ENCODE measurements at regions of chr19 and their contacts with region 1.

Region 1: GRCh38 chr19:16233836-16234551 is 36.3 kb downstream of the AP1M1 start:
- DNase-seq: no peak
- ATAC-seq: no peak
- H3K4me3 ChIP-seq: no peak overlapping the region
- H3K4me3 Mint-ChIP-seq: peak overlapping the region in 1 of 10 donors; percentile 12
- H3K27ac ChIP-seq: no peak overlapping the region
- H3K27ac Mint-ChIP-seq: peak overlapping the region in 4 of 9 donors; percentile 50 to 82 (median 68)
- H3K4me1 ChIP-seq: peaks cover 0 to 22% of the 10 kb centered on the region in 2 donors
- H3K4me1 Mint-ChIP-seq: peaks cover 18 to 31% (median 28%) of the 10 kb centered on the region in 7 donors
- H3K27me3 ChIP-seq: no peaks in the 10 kb centered on the region
- H3K27me3 Mint-ChIP-seq: no peaks in the 10 kb centered on the region

Region 2: DNA sequence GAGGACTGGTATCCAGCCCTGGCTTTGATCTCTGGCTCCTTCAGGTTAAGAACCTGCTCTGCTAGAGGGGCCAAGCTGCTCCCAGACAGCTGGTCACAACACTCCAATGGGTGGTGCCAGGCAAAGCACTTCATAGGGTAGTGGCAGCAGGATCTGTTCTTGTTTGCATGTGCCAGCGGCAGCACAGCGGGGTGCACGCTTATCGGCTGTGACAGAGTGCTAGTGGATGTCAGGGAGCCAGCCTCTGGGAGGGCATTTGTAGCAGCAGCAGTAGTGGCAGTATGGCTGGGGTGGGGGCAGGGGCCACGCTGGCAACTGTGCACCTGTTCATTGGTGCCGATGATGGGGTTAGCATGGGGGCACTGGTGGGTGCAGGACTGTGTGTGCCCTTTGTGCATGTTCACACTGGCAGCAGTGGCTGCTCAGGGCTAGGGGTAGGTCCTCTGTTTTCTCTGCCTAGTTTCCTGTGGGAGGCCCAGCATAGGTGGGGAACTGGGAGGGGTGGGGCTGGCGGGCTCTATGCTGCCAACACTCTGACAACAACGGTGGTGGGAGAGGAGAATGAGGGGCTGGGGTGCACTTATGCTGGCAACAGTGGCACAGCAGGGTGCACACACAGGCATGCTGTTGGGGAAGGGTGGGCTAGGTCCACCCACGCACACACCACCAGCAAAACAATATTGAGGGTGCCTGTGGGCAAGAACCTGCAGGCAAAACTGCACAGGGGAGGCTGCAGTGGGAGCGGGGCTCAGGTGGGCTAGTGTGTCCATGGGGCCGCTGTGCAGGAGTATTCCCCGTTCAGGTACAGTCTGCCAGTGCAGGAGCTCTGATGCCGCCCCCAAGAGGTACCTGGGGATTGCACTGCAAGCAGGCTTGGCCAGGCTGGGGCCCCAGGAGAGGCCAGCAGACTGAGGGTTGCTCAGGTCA is 17.0 kb before region 1 on chr19:
- CTCF ChIA-PET with region 1: interaction called, 3 read pairs
- POLR2A ChIA-PET with region 1: interaction called, 6 read pairs
- intact Hi-C with region 1: loop called in 1 of 2 experiments (anchors 1 kb)
- DNase-seq: peak in 7 of 9 donors; percentile 36 to 55 (median 50)
- ATAC-seq: peak; percentile 76
- H3K4me3 ChIP-seq: peak overlapping the region; percentile 34
- H3K4me3 Mint-ChIP-seq: peak overlapping the region; percentile 33 to 85 (median 78)
- H3K27ac ChIP-seq: peak overlapping the region; percentile 57
- H3K27ac Mint-ChIP-seq: peak overlapping the region; percentile 52 to 97 (median 92)
- H3K4me1 ChIP-seq: peaks cover 0 to 44% of the 10 kb centered on the region in 2 donors
- H3K4me1 Mint-ChIP-seq: peaks cover 29 to 68% (median 56%) of the 10 kb centered on the region in 7 donors
- H3K27me3 ChIP-seq: no peaks in the 10 kb centered on the region
- H3K27me3 Mint-ChIP-seq: no peaks in the 10 kb centered on the region

Region 3: DNA sequence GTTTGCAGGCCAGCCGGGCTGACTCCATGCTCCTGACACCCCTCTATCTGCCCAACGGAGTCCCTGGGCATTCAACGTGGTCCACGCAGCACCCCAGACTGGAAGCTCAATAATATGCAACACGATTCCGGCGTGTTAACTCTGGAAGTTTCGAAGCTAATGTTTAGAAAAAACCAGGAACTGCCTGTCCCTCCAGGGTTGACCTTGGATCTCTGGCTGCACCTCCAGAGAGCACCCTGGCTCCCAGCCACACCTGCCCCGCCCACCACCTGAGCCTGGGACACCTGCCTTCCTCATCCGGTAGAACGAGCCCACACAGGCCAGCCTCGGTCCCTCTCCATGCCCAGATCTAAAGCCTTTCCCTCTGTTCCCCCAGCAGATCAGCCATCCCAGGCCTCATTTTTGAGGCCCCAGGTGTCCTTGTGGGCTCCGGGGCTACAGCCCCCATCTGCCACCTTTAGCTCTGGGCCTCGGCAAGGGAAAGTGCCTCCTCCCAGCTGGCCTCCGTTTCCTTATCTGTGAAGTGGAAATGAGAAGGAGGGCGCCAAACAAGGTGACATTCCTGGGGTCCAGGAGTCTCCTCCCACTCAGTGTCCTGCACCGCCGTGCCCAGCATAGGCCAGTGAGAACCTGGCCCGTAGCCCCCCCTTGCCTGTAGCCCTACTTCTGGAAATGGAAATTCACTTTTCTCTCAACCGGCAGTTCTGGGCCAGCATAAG is 129.3 kb after region 1 on chr19:
- CTCF ChIA-PET with region 1: no interaction called
- POLR2A ChIA-PET with region 1: no interaction called
- intact Hi-C with region 1: no loop called
- DNase-seq: no peak
- ATAC-seq: no peak
- H3K4me3 ChIP-seq: no peak overlapping the region
- H3K4me3 Mint-ChIP-seq: peak overlapping the region in 8 of 10 donors; percentile 17 to 74 (median 44)
- H3K27ac ChIP-seq: peak overlapping the region; percentile 99
- H3K27ac Mint-ChIP-seq: peak overlapping the region in 5 of 9 donors; percentile 68 to 96 (median 86)
- H3K4me1 ChIP-seq: peaks cover 74 to 93% of the 10 kb centered on the region in 2 donors
- H3K4me1 Mint-ChIP-seq: peaks cover 63 to 89% (median 76%) of the 10 kb centered on the region in 7 donors
- H3K27me3 ChIP-seq: no peaks in the 10 kb centered on the region
- H3K27me3 Mint-ChIP-seq: peaks cover 0 to 13% (median 0%) of the 10 kb centered on the region in 5 donors